Tibial artery (tissue), 4 donors: ENCODE measurements at regions of chr11 and their contacts with region 1.

Region 1: DNA sequence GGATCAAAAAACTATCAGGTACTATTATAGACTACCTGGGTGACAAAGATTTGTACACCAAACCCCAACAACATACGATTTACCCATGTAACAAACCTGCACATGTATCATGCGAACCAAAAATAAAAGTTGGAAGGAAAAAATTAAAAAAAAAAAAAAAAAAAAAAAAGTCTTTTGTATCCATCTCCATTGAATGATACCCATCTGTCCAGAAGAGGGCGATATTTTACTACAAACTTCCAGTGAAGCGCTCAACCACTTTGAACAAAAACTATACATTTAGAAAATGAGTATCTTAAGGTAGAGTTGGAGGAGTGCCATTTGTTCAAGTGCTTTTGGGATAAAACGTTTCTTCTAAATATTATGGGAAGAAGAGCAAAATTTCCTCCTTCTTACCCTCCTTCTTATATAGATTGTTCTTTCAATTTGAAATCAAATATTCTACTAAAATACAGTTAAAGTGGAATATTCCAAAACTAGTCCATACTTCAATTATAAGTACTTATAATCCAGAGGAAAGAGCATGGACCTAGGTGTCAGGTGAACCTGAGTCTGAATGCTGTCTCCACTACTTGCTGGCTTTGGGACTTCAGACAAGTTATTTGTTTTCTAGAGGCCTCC is 23.3 kb downstream of the ARL14EP start:
- DNase-seq: no peak
- H3K4me3 ChIP-seq: no peak overlapping the region
- H3K27ac ChIP-seq: no peak overlapping the region
- H3K4me1 ChIP-seq: no peaks in the 10 kb centered on the region
- H3K27me3 ChIP-seq: no peaks in the 10 kb centered on the region
- CTCF ChIP-seq: peak; percentile 35 to 64

Region 2: DNA sequence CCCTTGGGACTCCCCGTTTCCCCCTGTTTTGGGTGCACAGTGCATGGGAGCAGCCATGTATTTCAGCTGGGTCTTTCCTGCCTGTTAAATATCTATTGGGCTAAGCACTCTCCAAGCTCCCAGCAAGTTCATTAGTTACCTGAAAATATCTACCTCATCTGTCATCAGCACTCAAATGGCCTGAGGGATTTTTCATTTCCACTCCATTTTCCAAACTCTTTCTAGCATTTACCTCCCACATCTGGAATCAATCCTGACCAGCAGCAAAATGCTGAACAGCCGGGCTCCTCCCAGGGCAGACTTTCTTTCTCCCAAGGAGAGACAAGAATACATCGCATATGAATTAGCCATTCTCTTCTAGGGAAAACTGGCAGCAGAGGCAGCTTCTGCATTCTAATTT is 513.5 kb after region 1 on chr11:
- intact Hi-C with region 1: loop called (anchors 2 kb)
- DNase-seq: no peak
- H3K4me3 ChIP-seq: no peak overlapping the region
- H3K27ac ChIP-seq: no peak overlapping the region
- H3K4me1 ChIP-seq: peaks cover 0 to 8% (median 3%) of the 10 kb centered on the region in 4 donors
- H3K27me3 ChIP-seq: no peaks in the 10 kb centered on the region
- CTCF ChIP-seq: no peak

Region 3: DNA sequence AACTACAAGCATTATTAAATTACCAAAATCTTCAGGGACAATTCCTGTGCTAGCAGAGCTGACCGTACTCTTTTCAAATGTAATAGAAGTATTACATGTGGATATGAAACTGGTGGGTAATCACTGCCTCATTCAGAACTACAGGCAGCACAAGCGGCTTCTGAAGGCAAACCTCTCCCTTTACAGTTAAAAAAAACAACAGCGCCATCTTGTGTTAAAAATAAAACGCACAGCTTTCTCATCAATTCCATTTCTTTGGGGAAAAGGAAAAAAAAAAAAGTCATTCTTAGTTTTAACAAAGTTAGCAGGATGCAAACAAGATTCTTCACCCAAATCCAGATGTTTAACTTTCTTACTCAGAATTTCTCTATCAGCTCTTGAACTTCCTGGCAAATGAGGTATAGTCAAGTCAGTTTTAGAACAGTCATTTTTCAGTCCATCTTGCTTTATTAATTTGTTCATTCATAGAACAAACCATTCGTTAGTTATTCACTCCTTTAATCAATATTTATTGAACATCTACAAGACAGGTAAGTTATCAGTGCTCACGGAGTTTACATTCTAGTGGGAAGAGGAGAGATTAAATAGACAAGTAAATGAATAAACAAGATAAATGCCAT is 571.8 kb after region 1 on chr11:
- intact Hi-C with region 1: loop called (anchors 5 kb)
- DNase-seq: no peak
- H3K4me3 ChIP-seq: no peak overlapping the region
- H3K27ac ChIP-seq: no peak overlapping the region
- H3K4me1 ChIP-seq: no peaks in the 10 kb centered on the region
- H3K27me3 ChIP-seq: no peaks in the 10 kb centered on the region
- CTCF ChIP-seq: peak; percentile 58 to 69